ENCODE measurements at regions of chr4 and their contacts with region 1.

Region 1: GRCh38 chr4:128287871-128288688 is 467 bp upstream of the PGRMC2 start:
- DNase-seq: peak; percentile 89 to 97
- H3K4me3 ChIP-seq: peak overlapping the region; percentile 87
- H3K27ac ChIP-seq: peak overlapping the region; percentile 88
- H3K4me1 ChIP-seq: peaks cover 28% of the 10 kb centered on the region
- H3K27me3 ChIP-seq: no peaks in the 10 kb centered on the region
- CTCF ChIP-seq: no peak; the same call in 1 of the 2 replicates

Region 2: GRCh38 chr4:127959794-127960193 is 328.3 kb before region 1 on chr4:
- CTCF ChIA-PET with region 1: no interaction called
- POLR2A ChIA-PET with region 1: no interaction called
- intact Hi-C with region 1: no loop called
- DNase-seq: no peak
- H3K4me3 ChIP-seq: no peak overlapping the region
- H3K27ac ChIP-seq: no peak overlapping the region
- H3K4me1 ChIP-seq: no peaks in the 10 kb centered on the region
- H3K27me3 ChIP-seq: no peaks in the 10 kb centered on the region
- CTCF ChIP-seq: no peak

Region 3: GRCh38 chr4:128191115-128191781 is 96.8 kb before region 1 on chr4:
- CTCF ChIA-PET with region 1: no interaction called
- POLR2A ChIA-PET with region 1: no interaction called
- intact Hi-C with region 1: loop called (anchors 1 kb)
- DNase-seq: peak; percentile 45 to 55
- H3K4me3 ChIP-seq: no peak overlapping the region
- H3K27ac ChIP-seq: no peak overlapping the region
- H3K4me1 ChIP-seq: no peaks in the 10 kb centered on the region
- H3K27me3 ChIP-seq: no peaks in the 10 kb centered on the region
- CTCF ChIP-seq: peak; percentile 89

Region 4: DNA sequence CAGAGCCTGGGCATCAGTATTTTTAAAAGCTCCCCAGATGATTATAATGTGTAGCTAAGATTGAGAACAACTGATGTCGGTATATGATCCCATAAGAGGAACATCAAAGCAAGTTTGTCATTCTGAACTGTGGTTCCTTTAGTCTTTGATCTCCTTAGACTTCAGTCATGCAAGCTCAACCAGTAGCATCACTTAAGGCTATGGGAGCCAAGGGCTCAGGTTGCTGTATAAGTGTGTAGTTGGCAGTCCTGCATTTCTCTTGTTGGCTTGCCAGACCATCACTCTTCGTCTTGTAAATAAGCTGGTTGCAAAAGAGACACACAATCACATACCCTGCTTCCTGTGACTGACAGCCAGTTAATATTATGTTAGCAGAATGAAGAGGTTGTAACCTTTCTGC is 83.2 kb before region 1 on chr4:
- CTCF ChIA-PET with region 1: no interaction called
- POLR2A ChIA-PET with region 1: no interaction called
- intact Hi-C with region 1: no loop called
- DNase-seq: no peak
- H3K4me3 ChIP-seq: no peak overlapping the region
- H3K27ac ChIP-seq: no peak overlapping the region
- H3K4me1 ChIP-seq: no peaks in the 10 kb centered on the region
- H3K27me3 ChIP-seq: no peaks in the 10 kb centered on the region
- CTCF ChIP-seq: no peak

Region 5: DNA sequence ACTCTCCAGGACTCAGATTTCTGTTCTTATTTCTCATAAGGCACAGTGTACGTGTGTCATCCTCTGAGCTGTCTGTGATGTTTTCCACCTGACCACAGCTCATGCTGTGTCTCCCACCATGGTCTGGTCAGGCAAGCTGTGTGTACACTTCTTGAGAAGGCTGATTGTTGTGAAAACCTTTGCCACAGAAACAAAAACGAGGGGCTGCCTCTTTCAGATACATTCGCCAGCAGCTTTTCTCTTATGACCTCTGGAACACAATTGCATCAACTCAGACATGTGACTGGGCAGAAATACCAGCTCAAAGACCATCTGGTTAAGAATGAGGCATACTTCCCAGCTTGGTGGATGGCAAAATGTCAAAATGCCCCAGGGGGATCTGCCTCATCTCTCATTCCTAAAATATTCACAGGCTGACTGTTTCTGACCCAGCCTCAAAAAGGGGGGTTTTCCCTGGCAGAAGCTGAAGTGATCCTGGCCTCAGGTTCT is 46.6 kb before region 1 on chr4:
- CTCF ChIA-PET with region 1: no interaction called
- POLR2A ChIA-PET with region 1: no interaction called
- intact Hi-C with region 1: loop called (anchors 5 kb)
- DNase-seq: peak; percentile 87 to 88
- H3K4me3 ChIP-seq: peak overlapping the region; percentile 24; the same call in 1 of the 2 replicates
- H3K27ac ChIP-seq: peak overlapping the region; percentile 87
- H3K4me1 ChIP-seq: peaks cover 20% of the 10 kb centered on the region
- H3K27me3 ChIP-seq: no peaks in the 10 kb centered on the region
- CTCF ChIP-seq: no peak

Region 6: DNA sequence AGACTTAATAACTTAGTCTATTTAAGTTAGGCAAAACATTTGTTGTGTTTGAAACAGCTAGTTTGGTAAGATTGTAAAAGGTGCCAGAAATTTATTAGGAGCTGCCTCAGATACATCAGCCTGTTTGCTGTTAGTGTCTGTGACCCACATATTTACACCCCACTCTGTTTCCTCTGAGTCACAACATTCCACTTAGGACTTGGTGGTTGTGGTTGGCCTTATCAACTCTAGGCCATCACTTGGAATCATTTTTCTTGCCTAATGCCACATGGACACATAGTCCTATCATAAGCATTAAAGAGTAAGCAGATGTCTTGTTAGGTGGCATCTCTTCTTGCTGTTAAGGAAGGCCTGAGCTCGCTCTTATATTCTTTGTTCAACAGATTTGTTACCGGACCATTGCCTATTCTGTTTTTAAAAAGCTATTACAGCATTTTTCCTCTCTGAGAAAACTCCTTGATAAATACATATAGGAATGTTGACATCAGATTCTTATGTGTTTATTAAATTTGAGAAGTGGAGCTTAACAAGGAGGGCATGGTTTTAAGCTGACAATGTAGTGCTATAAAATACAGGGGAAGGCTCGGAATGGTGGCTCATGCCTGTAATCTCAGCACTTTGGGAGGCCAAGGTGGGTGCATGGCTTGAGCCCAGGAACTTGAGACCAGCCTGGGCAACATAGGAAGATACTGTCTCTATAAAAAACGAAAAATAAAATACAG is 50.7 kb after region 1 on chr4:
- CTCF ChIA-PET with region 1: no interaction called
- POLR2A ChIA-PET with region 1: interaction called, 12 read pairs
- intact Hi-C with region 1: no loop called
- DNase-seq: peak; percentile 50 to 86
- H3K4me3 ChIP-seq: no peak overlapping the region
- H3K27ac ChIP-seq: peak overlapping the region; percentile 57
- H3K4me1 ChIP-seq: peaks cover 25% of the 10 kb centered on the region
- H3K27me3 ChIP-seq: no peaks in the 10 kb centered on the region
- CTCF ChIP-seq: no peak

Region 7: DNA sequence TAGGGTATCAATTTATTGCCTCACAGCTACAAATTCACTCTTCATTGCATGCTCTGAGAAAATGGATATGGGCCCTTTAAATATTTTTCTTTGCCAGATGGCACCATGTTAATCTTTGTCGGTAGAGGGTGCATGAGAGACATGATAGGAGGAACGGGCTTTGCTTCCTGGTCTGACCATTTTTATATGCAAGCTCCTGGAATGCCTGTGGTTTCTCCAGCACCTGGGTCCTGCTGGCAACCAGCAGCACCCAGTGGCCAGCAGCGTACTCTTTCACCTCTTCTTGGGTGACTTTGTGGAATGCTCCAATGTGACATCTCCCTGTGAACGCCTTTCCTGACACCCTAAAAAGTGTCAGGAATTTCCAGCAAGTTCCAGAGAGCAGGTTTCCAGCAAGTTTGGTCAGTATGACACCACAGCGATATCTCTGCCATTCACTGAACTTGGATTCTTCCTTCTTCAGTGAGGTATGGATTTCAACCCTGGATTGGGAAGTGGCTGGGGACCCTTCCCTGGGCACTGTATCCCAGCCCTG is 139.8 kb after region 1 on chr4:
- CTCF ChIA-PET with region 1: interaction called, 3 read pairs
- POLR2A ChIA-PET with region 1: interaction called, 19 read pairs
- intact Hi-C with region 1: loop called (anchors 1 kb)
- DNase-seq: peak; percentile 80 to 89
- H3K4me3 ChIP-seq: no peak overlapping the region
- H3K27ac ChIP-seq: no peak overlapping the region
- H3K4me1 ChIP-seq: peaks cover 10% of the 10 kb centered on the region; the same call in 1 of the 2 replicates
- H3K27me3 ChIP-seq: no peaks in the 10 kb centered on the region
- CTCF ChIP-seq: peak; percentile 72

Region 8: DNA sequence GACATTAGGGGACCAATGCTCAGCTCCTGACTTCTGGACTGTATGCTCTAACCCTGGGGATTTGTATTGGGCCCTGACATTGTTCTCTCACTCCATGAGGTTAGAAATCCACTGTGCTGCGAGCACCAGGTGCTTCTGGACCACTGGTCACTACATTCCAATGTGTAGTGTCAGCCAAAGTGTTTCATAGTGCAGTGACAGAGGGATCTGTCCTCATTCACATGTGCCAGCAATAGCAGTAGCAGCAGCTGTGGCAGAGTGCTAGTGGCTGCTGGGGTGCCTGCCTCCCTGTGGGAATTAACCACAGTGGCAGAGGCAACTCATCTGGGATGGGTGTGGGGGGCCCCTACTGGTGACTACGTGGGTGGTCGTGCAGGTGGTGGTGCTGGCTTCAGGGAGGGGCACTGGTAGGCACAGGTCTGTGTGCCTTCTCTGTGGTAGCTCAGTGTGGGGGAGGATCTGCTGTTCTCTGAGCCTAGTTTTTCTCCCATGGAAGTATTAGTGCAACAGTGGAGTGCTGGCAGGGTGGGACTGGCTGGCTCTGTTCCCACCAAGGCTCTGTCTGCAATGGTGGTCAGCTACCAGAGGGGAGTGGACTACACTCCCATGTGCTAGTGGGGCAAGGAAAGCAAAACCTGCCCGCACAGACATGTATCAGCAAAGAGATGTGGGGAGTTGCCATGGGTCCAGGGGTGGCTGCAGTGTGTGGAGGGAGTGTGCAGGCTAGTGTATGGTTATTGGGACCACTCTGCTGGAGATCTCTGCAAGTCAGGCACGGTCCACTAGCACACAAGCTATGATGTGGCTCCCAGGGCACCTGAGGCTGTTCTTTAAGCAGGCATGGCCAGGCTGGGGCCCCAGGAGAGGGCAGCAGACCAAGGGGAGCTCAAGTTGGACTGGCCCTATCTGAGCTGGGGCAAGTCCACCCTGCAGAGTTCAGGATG is 726.8 kb after region 1 on chr4:
- CTCF ChIA-PET with region 1: no interaction called
- POLR2A ChIA-PET with region 1: no interaction called
- intact Hi-C with region 1: no loop called
- DNase-seq: no peak
- H3K4me3 ChIP-seq: no peak overlapping the region
- H3K27ac ChIP-seq: no peak overlapping the region
- H3K4me1 ChIP-seq: no peaks in the 10 kb centered on the region
- H3K27me3 ChIP-seq: no peaks in the 10 kb centered on the region
- CTCF ChIP-seq: no peak

Measured in PC-9 (cell line).